ENCODE measurements at regions of chr7 and their contacts with region 1.

Region 1: DNA sequence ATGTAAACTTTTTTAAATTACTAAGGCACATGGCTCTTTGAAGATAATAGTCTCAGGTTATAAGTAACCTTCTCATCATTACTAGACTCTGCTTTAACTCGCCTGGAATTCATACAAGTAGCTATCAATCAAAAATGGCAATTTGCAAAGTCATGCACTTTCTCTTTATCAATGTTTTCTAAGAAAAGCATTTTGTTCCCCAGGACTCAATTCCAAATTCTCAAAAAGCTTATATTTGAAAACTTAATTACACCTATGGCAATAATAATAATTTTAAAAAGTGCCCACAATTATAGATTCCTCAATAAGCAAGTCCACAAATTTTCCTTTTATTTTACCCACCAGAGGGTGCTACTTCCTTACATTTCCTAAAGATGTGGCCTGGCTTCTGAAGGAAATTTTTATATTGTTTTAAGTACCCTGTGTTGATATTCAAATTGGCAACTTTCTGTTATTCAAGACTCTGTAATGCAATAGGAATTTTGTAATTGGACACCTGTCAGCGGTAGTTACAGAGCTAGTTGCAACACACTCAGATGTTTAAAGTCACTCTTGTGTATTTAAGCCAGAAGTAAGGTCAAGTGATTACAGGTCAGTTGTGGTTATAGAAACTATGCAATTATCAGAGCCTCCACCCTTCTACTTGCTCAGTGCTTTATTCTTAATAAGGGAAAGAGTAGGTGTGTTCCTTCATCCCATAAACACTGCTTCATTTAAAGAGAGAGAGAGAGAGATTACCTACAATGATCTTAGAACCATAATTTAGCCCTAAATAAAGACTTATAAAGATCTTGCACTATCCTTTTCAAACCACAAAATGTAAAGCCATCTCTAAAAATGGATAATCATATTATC is 47.1 kb upstream of the HYAL4 start:
- DNase-seq: peak in 3 of 4 experiments; percentile 27 to 59 (median 28)
- ATAC-seq: peak; percentile 78
- H3K4me3 ChIP-seq: no peak overlapping the region
- H3K27ac ChIP-seq: no peak overlapping the region
- H3K4me1 ChIP-seq: peaks cover 0 to 13% of the 10 kb centered on the region in 2 experiments; a peak in 1 of 5 replicates
- H3K27me3 ChIP-seq: no peaks in the 10 kb centered on the region
- CTCF ChIP-seq: peak; percentile 42 to 80 (median 45); a peak in 4 of 6 replicates
- EP300 ChIP-seq: no peak
- POLR2A ChIP-seq: no peak
- RAD21 ChIP-seq: peak; percentile 87 to 91

Region 2: GRCh38 chr7:123844712-123845219 is 46.9 kb after region 1 on chr7 and contains the start of gene HYAL4:
- CTCF ChIA-PET with region 1: no interaction called
- POLR2A ChIA-PET with region 1: no interaction called
- in situ Hi-C with region 1: loop called (anchors 5 kb)
- intact Hi-C with region 1: no loop called
- DNase-seq: no peak
- ATAC-seq: no peak
- H3K4me3 ChIP-seq: no peak within 1 kb of the TSS
- H3K27ac ChIP-seq: no peak within 1 kb of the TSS
- H3K4me1 ChIP-seq: no peaks in the 10 kb centered on the region
- H3K27me3 ChIP-seq: no peaks in the 10 kb centered on the region
- CTCF ChIP-seq: no peak
- EP300 ChIP-seq: no peak
- POLR2A ChIP-seq: no peak
- RAD21 ChIP-seq: no peak
- polyA plus RNA-seq, gene HYAL4: not detected

Region 3: DNA sequence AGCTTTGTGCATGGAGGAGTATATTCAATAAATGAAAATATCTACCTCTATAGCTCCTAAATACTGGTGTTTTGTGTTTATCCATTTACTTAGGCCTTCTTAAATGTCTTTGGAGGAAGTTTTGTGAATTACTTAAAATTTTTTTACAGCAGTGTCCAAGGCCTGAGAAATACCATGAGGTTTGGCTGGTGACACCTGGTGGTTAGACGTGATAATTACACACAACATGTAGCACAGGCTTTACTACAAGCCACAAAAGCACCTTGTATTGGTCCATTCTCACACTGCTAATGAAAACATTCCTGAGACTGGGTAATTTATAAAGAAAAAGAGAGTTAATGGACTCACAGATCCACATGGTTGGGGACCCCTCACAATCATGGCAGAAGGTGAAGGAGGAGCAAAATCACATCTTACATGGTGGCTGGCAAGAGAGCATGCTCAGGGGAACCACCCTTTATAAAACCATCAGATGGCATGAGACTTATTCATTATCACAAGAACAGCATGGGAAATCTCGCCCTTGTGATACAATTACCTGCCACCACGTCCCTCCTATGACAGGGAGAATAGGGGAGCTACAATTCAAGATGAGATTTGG is 67.7 kb after region 1 on chr7:
- CTCF ChIA-PET with region 1: interaction called, 10 read pairs
- POLR2A ChIA-PET with region 1: no interaction called
- in situ Hi-C with region 1: no loop called
- intact Hi-C with region 1: loop called (anchors 1 kb)
- DNase-seq: peak; percentile 42 to 80 (median 68)
- ATAC-seq: peak; percentile 96
- H3K4me3 ChIP-seq: no peak overlapping the region
- H3K27ac ChIP-seq: no peak overlapping the region
- H3K4me1 ChIP-seq: no peaks in the 10 kb centered on the region
- H3K27me3 ChIP-seq: 0 out of 5 replicates have a peak, but pooled peaks cover 0 to 5% of the 10 kb centered on the region in 2 experiments
- CTCF ChIP-seq: peak; percentile 65 to 84 (median 72)
- EP300 ChIP-seq: no peak
- POLR2A ChIP-seq: no peak
- RAD21 ChIP-seq: peak; percentile 92 to 93

Measured in K562 (cell line).